ENCODE measurements at regions of chr6 and their contacts with region 1.

Region 1: GRCh38 chr6:71383901-71384489 is 95.4 kb downstream of the OGFRL1 start:
- DNase-seq: no peak
- ATAC-seq: no peak
- H3K4me3 Mint-ChIP-seq: no peak overlapping the region
- H3K27ac Mint-ChIP-seq: no peak overlapping the region
- H3K4me1 Mint-ChIP-seq: peaks cover 3% of the 10 kb centered on the region
- H3K27me3 Mint-ChIP-seq: no peaks in the 10 kb centered on the region
- CTCF ChIP-seq: no peak

Region 2: DNA sequence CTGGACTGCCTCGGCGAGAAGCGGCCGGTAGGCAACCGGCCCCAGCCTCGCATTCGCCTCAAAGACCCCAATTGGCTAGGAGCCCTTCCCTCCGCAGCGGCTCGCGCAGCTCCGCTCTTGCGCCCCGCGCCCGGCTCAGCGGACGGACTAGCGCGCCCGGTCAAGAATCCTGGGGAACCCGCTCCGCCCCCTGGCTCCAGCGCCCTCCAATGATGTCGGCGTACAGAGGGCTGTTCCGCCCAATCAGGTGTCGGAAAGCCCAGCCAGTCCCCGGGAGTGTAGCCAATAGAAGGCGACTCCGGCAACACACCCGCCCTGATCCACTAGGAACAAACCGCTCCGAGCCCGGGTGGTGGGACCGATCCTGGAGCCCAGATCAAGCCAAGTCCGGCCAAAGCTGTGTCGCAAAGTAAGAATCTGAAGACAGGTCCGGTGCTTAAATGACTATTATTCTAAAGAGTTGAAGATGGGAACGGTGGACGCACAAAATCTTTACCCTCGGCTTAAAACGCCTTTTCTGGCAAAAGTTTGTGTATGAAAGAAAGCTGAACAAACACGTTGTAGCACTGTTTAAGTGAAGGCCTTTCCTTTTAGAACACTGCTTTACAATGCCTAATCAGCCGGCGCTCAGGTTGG is 36.8 kb after region 1 on chr6:
- CTCF ChIA-PET with region 1: no interaction called
- POLR2A ChIA-PET with region 1: no interaction called
- intact Hi-C with region 1: no loop called
- DNase-seq: peak; percentile 56
- ATAC-seq: peak; percentile 98
- H3K4me3 Mint-ChIP-seq: peak overlapping the region; percentile 85
- H3K27ac Mint-ChIP-seq: no peak overlapping the region
- H3K4me1 Mint-ChIP-seq: peaks cover 9% of the 10 kb centered on the region
- H3K27me3 Mint-ChIP-seq: peaks cover 39% of the 10 kb centered on the region
- CTCF ChIP-seq: no peak

Region 3: DNA sequence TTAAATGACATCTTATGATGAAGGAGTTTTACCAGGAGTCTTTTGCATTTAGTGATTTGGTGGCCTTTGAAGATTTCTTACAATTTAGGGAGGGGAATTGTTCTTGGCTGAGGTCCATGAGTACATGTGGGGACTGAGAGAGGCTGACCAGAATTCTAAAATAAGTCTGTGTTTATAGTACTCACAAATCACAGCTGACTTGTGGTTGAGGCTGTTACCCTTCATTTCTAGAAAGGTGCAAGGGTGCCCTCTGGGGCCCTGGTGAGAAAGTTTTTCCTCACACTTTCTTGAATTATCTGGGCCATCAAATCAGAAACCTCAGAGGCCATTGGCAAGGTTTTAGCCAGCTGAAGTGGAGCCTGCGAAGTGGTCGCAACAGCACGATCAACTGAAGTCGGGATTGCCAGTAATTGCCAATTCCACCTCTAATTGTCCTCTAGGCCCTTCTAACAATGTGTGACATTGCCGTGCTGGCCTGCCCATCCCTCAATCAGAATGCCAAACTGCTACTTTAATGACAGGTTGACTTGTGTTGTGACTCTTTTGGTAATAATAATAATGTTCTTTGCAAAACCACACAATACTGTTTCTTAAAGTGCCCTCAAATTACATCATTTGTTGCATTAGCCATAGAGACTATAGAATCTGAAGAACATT is 126.2 kb after region 1 on chr6:
- CTCF ChIA-PET with region 1: interaction called, 16 read pairs
- POLR2A ChIA-PET with region 1: no interaction called
- intact Hi-C with region 1: loop called (anchors 1 kb)
- DNase-seq: no peak
- ATAC-seq: no peak
- H3K4me3 Mint-ChIP-seq: no peak overlapping the region
- H3K27ac Mint-ChIP-seq: no peak overlapping the region
- H3K4me1 Mint-ChIP-seq: peaks cover 4% of the 10 kb centered on the region
- H3K27me3 Mint-ChIP-seq: peaks cover 3% of the 10 kb centered on the region
- CTCF ChIP-seq: no peak

Region 4: GRCh38 chr6:72999995-73000394 is 1616.0 kb after region 1 on chr6:
- CTCF ChIA-PET with region 1: no interaction called
- POLR2A ChIA-PET with region 1: no interaction called
- intact Hi-C with region 1: no loop called
- DNase-seq: no peak
- ATAC-seq: no peak
- H3K4me3 Mint-ChIP-seq: no peak overlapping the region
- H3K27ac Mint-ChIP-seq: no peak overlapping the region
- H3K4me1 Mint-ChIP-seq: no peaks in the 10 kb centered on the region
- H3K27me3 Mint-ChIP-seq: no peaks in the 10 kb centered on the region
- CTCF ChIP-seq: no peak

Measured in activated B cell treated with CpG ODN at 0.5 μM for 24 hours (primary cell).